Activated T-helper 1 cell treated with anti-CD3 and anti-CD28 coated beads, Interleukin-12 subunit alpha, Interleukin-12 subunit beta, Interleukin-2, Interleukin-4 antibody, amounts not matched to agents 30 ng/mL and 10 ng/mL and 1 ng/mL, durations not matched to agents 14 hours and 24 hours and 36 hours (primary cell): ENCODE measurements at regions of chr14 and their contacts with region 1.

Region 1: DNA sequence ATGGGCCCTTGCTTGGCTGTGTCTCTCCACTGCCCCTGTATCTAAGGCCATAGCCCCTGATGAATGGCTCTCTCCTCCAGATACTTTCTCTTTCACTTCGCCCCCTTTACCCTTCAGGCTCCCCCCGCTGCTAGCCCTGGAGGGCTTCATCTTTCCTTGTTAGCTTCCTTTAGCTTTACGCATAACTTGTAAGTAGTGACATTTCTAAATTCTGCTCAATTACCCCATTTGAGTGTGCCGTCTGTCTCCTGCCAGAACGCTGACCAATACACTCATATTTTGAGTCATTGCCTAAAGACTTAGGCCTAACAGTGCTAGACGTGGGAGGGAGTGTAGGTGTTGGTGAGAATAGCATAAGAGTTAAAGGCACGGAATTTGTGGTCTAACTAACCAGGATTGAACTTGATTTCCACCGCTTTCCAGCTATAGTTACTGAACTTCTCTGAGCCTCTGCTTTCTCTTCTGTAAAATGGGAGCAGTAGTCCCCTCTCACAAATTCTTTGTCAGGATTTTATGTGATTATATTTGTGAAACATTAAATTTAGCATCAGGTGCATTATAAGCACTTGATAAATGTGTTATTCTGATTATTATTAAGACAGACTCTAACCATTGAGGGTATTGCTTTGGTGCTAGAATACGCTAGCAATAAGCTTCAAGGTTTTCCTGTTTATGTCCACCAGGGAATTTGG is 129.3 kb downstream of the ZFP36L1 start:
- DNase-seq: peak; percentile 26
- H3K4me3 Mint-ChIP-seq: peak overlapping the region; percentile 45
- H3K27ac Mint-ChIP-seq: peak overlapping the region; percentile 72
- H3K4me1 Mint-ChIP-seq: peaks cover 55% of the 10 kb centered on the region
- H3K27me3 Mint-ChIP-seq: peaks cover 4% of the 10 kb centered on the region

Region 2: GRCh38 chr14:68271913-68272425 is 391.6 kb before region 1 on chr14:
- intact Hi-C with region 1: no loop called
- DNase-seq: no peak
- H3K4me3 Mint-ChIP-seq: no peak overlapping the region
- H3K27ac Mint-ChIP-seq: peak overlapping the region; percentile 37
- H3K4me1 Mint-ChIP-seq: peaks cover 45% of the 10 kb centered on the region
- H3K27me3 Mint-ChIP-seq: no peaks in the 10 kb centered on the region

Region 3: GRCh38 chr14:68283378-68284123 is 380.0 kb before region 1 on chr14:
- intact Hi-C with region 1: loop called (anchors 1 kb)
- DNase-seq: peak; percentile 52
- H3K4me3 Mint-ChIP-seq: peak overlapping the region; percentile 40
- H3K27ac Mint-ChIP-seq: peak overlapping the region; percentile 92
- H3K4me1 Mint-ChIP-seq: peaks cover 57% of the 10 kb centered on the region
- H3K27me3 Mint-ChIP-seq: peaks cover 1% of the 10 kb centered on the region

Region 4: GRCh38 chr14:68593806-68594561 is 69.5 kb before region 1 on chr14:
- intact Hi-C with region 1: no loop called
- DNase-seq: no peak
- H3K4me3 Mint-ChIP-seq: no peak overlapping the region
- H3K27ac Mint-ChIP-seq: peak overlapping the region; percentile 63
- H3K4me1 Mint-ChIP-seq: peaks cover 8% of the 10 kb centered on the region
- H3K27me3 Mint-ChIP-seq: no peaks in the 10 kb centered on the region

Region 5: DNA sequence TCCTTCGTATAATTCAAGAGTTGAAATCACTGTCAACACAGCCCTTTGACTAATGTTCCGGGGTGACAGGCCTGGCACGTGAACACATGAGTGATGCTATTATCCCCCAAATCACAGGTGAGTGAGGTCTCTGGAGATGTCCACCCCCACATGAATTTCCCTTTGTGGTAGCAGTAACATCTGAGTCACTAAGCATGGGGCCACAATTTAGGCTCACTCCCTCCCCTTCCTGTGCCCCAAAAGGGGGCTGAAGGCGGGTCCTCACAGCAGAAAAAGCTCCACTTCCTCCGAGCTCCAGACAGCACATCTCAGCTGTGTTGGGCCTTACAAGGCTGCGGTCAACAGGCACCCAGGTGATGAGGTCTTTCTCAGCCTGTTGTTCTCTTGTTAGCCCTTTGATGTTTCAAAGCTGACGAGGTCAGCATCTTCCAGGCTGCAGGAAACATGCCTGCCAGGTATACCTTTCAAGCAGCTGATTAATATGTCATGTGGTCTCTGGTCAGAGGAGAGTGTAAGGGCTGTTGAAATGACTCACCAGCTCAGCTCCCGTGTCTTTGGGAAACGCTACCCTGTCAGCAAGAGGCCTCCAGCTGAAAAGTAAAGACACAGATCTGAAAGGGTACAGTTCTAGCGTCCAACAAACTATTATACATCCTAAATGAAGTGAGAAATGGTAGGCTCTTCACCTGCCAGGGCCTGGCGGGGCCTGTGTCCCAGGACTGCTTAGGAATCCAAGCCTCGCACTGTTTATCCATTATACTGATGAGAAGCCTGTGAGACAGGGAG is 22.1 kb after region 1 on chr14:
- intact Hi-C with region 1: loop called (anchors 1 kb)
- DNase-seq: peak; percentile 71
- H3K4me3 Mint-ChIP-seq: peak overlapping the region; percentile 45
- H3K27ac Mint-ChIP-seq: peak overlapping the region; percentile 86
- H3K4me1 Mint-ChIP-seq: peaks cover 61% of the 10 kb centered on the region
- H3K27me3 Mint-ChIP-seq: peaks cover 2% of the 10 kb centered on the region

Region 6: DNA sequence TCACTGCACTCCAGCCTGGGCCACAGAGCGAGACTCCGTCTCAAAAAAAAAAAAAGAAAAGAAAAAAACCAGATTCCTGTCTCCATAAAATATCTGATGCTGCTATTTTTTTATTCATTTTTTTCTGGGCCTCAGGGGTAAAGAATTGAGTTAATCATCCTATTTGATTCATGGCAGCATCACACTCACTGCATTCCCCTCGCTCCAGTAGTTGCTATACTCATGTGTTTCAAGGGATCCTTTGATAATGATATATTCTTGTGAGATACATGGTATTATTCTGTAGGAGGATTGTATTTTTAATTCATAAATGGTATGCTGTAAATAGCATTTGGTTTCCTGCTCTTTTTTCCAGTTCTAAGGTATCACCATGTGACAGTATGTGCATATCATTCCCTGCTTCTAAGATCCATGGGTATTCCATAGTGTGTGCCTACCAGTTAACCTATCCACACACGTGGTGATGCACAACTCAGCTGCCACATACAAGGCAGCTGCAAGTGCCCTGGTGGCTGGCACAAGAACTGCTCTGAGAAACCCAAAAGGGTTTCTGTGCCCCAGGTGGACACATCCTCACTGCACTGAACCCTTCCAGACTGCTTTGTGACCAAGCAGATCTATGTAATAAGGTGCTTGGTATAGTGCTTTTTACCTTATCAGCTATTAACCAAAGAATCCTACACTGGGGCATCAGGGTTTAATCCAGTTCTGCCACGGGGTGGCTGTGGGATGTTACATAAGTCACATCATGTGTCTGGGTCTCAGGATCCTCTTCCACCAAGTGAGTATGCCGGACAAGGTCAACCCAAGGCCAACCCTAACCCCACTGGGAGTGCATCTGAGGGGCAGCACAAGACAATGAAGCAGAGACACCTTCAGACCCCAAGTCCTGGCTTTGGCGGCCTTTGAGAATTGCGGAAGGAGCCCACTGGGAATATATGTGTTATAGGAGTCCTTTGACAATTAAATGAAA is 54.8 kb after region 1 on chr14:
- intact Hi-C with region 1: loop called (anchors 1 kb)
- DNase-seq: no peak
- H3K4me3 Mint-ChIP-seq: no peak overlapping the region
- H3K27ac Mint-ChIP-seq: no peak overlapping the region
- H3K4me1 Mint-ChIP-seq: peaks cover 56% of the 10 kb centered on the region
- H3K27me3 Mint-ChIP-seq: peaks cover 2% of the 10 kb centered on the region

Region 7: GRCh38 chr14:68788996-68789820 is 125.7 kb after region 1 on chr14:
- intact Hi-C with region 1: loop called (anchors 1 kb)
- DNase-seq: peak; percentile 82
- H3K4me3 Mint-ChIP-seq: peak overlapping the region; percentile 98
- H3K27ac Mint-ChIP-seq: peak overlapping the region; percentile 100
- H3K4me1 Mint-ChIP-seq: peaks cover 65% of the 10 kb centered on the region
- H3K27me3 Mint-ChIP-seq: no peaks in the 10 kb centered on the region